ENCODE measurements at regions of chr16 and their contacts with region 1.

Region 1: GRCh38 chr16:88941913-88942909 is 34.8 kb downstream of the CBFA2T3 start:
- DNase-seq: peak in 2 of 10 donors; percentile 71 to 77
- H3K4me3 ChIP-seq: peak overlapping the region in 54 of 59 donors; percentile 10 to 72 (median 44)
- H3K27ac ChIP-seq: no peak overlapping the region
- H3K27me3 ChIP-seq: peaks cover 0 to 33% (median 5%) of the 10 kb centered on the region in 45 donors
- CTCF ChIP-seq: peak in 55 of 56 donors; percentile 17 to 90 (median 60)

Region 2: DNA sequence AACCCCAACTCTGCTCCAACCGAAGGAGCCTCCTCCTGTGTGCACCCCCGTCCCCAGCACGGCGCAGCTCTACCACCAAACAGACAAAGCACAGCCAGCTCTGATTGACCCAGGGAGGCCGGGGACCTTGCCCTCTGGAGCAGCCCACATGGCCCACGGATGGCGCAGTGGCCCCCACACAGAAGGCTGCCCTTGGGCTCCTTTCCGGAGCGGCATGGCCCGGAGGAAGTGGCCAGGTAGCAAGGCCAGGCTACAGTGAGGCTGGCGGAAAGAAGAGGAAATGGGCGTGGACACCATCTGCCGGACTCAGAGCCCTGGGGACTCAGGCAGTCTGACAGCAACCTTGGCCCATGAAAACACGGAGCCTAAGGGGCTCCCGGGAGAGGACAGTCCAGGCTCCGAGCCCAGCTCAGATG is 392.0 kb before region 1 on chr16:
- intact Hi-C with region 1: no loop called
- DNase-seq: peak in 1 of 10 donors; percentile 74
- H3K4me3 ChIP-seq: no peak overlapping the region
- H3K27ac ChIP-seq: no peak overlapping the region
- H3K27me3 ChIP-seq: peaks cover 0 to 29% (median 0%) of the 10 kb centered on the region in 45 donors
- CTCF ChIP-seq: no peak

Region 3: DNA sequence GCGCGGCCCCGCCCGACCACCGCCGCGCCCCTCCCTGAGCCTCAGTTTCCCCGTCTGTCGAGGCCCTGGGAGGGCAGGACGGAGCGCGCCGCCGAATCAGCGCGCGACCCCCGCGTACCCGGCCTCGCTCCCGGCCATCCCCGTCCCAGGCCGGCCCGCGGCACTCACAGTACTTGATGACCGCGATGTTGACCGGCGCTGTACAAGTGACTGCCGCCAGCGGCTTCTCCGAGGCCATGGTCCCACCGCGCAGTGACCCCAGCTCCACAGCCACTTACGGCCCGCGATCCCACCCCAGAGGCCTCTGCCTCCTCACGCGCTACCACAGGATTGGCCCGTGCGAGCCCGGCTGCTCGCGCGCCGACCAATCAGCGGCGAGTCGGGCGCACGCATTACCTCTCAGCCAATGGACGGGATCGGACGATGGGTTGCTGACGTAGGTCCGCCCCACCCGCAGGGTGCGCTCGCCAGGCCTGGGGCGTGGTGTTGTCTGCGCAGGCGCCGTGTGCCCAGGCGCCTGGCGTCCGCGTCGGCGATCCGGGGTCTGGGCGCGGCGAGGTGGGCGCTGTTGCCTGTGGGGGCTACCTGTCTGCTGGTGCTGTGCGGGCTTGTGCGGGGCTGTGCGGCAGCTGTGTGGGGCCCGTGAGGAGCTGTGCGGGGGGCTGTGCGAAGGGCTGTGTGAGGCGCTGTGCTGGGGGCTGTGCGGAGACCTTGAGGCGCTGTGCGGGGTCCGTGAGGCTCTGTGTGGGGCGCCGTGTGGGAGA is 279.2 kb before region 1 on chr16 and contains the start of gene MVD:
- intact Hi-C with region 1: no loop called
- DNase-seq: peak; percentile 96 to 100 (median 97)
- H3K4me3 ChIP-seq: peak within 1 kb of the TSS; percentile 64 to 100 (median 95)
- H3K27ac ChIP-seq: peak within 1 kb of the TSS in 56 of 59 donors; percentile 30 to 96 (median 85)
- H3K27me3 ChIP-seq: no peaks in the 10 kb centered on the region
- CTCF ChIP-seq: peak in 22 of 56 donors; percentile 11 to 46 (median 26)
- total RNA-seq, gene MVD: 44.3 to 110 (median 70.6) TPM

Region 4: GRCh38 chr16:89052890-89053592 is 110.8 kb after region 1 on chr16:
- intact Hi-C with region 1: loop called in 1 of 2 experiments (anchors 5 kb)
- DNase-seq: peak in 9 of 10 donors; percentile 46 to 90 (median 77)
- H3K4me3 ChIP-seq: peak overlapping the region; percentile 36 to 77 (median 61)
- H3K27ac ChIP-seq: peak overlapping the region in 43 of 59 donors; percentile 15 to 85 (median 51)
- H3K27me3 ChIP-seq: peaks cover 0 to 51% (median 5%) of the 10 kb centered on the region in 45 donors
- CTCF ChIP-seq: no peak

Region 5: DNA sequence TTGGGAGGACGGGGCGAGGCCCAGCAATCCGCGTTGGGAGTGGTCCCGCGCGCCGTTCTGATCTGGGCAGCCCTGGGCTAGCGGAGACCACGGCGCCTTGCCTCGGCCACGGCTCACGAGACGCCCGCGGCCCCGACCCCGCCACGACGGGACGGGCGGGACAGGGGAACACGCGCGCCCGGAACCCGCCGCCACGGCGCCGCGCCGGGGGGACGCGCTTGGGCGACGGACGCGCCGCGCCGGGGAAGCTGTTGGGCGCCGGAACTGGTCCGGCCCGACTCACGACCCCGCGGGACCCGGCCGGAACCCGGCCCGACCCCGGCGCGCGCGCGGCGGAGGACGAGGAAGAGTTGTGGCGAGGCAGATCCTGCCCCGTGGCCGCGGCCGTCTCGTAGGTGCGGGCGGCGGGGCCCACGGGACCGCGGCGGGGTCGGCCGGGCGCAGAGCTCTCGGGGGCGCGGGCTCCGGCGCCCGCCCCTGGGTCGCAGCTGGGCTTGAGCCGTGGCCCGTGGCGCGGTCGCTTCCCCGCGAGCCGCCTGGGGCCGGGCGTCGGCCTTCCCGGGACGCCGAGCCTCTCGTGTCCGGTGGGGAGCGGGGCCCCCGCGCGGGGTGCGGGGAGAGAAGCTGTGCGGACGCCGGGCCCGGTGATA is 151.5 kb after region 1 on chr16 and contains the start of gene ACSF3:
- intact Hi-C with region 1: loop called in 1 of 2 experiments (anchors 10 kb)
- DNase-seq: peak in 7 of 10 donors; percentile 14 to 87 (median 60)
- H3K4me3 ChIP-seq: peak within 1 kb of the TSS; percentile 60 to 96 (median 80)
- H3K27ac ChIP-seq: peak within 1 kb of the TSS in 21 of 59 donors; percentile 27 to 87 (median 64)
- H3K27me3 ChIP-seq: peaks cover 0 to 28% (median 11%) of the 10 kb centered on the region in 45 donors
- CTCF ChIP-seq: peak in 5 of 56 donors; percentile 11 to 35 (median 27)
- total RNA-seq, gene ACSF3: 20.4 to 51.9 (median 33.6) TPM

Region 6: GRCh38 chr16:89104930-89105571 is 162.8 kb after region 1 on chr16:
- intact Hi-C with region 1: no loop called
- DNase-seq: peak in 3 of 10 donors; percentile 29 to 33 (median 33)
- H3K4me3 ChIP-seq: no peak overlapping the region
- H3K27ac ChIP-seq: no peak overlapping the region
- H3K27me3 ChIP-seq: no peaks in the 10 kb centered on the region
- CTCF ChIP-seq: no peak

Region 7: GRCh38 chr16:89171463-89172170 is 229.4 kb after region 1 on chr16 and contains the start of gene CDH15:
- intact Hi-C with region 1: loop called (anchors 2 to 5 kb)
- DNase-seq: peak; percentile 67 to 99 (median 82)
- H3K4me3 ChIP-seq: peak within 1 kb of the TSS in 58 of 59 donors; percentile 7 to 60 (median 43)
- H3K27ac ChIP-seq: peak within 1 kb of the TSS in 1 of 59 donors; percentile 91
- H3K27me3 ChIP-seq: peaks cover 0 to 39% (median 6%) of the 10 kb centered on the region in 45 donors
- CTCF ChIP-seq: no peak
- total RNA-seq, gene CDH15: 0.16 to 0.81 (median 0.31) TPM in 14 of 120 experiments, not detected in the others

Measured in dorsolateral prefrontal cortex (tissue), 120 donors.